Motor neuron (in vitro differentiated cells): ENCODE measurements at regions of chr17 and their contacts with region 1.

Region 1: DNA sequence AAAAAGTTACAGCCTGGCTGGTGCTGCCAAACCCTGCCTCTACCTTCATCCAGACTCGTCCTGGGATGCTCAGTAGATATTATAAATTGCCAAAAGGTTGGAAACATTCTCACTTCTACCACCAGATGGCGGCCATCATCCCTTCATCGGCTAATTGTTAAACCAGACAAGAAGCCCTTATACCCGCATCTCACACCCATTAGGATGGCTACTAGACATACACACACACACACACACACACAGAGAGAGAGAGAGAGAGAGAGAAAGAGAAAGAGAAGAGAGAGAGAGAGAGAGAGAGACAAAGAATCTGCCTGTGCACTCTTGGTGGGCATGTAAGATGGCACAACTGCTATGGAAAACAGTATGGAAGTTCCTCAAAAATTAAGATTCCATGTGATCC is 15.0 kb upstream of the SCIMP start:
- ATAC-seq: peak; percentile 30 to 93 (median 71)
- H3K4me3 ChIP-seq: no peak overlapping the region
- H3K27ac ChIP-seq: no peak overlapping the region
- H3K4me1 ChIP-seq: no peaks in the 10 kb centered on the region

Region 2: DNA sequence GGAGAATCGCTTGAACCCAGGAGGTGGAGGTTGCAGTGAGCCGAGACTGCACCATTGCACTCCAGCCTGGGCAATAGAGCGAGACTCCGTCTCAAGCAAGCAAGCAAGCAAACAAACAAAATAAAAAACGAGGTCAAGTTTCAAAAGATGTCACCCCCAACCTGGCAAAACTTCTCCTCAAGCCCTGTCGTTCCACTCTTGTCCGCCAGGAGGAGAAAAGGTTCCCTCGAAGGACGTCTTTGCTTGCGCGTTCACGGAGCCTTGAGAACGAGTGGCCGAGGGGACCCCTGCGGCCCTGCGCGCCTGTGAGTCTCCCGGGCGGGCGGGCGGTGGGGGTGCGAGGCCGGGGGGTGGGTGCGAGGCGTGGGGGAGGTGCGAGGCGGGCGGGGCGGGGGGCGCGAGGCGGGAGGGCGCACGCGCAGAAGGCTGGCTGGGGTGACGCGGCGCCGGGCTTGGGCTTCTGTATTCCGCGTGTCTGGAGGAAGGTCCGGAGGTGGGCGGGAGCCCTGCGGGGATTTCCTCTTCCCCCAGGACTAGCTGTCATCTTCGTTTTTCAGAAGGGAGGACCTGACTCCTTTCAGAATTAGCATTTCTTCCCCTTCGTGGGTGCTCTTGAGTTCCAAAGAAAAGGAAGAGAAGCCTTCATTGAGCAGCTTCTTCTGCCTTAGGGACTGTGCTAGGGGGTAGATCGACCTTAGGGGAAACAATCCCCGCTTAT is 218.1 kb before region 1 on chr17:
- in situ Hi-C with region 1: no loop called
- ATAC-seq: peak; percentile 78 to 95 (median 92)
- H3K4me3 ChIP-seq: peak overlapping the region; percentile 20 to 29 (median 25)
- H3K27ac ChIP-seq: peak overlapping the region; percentile 1 to 66
- H3K4me1 ChIP-seq: peaks cover 5 to 6% of the 10 kb centered on the region in 2 donors

Region 3: DNA sequence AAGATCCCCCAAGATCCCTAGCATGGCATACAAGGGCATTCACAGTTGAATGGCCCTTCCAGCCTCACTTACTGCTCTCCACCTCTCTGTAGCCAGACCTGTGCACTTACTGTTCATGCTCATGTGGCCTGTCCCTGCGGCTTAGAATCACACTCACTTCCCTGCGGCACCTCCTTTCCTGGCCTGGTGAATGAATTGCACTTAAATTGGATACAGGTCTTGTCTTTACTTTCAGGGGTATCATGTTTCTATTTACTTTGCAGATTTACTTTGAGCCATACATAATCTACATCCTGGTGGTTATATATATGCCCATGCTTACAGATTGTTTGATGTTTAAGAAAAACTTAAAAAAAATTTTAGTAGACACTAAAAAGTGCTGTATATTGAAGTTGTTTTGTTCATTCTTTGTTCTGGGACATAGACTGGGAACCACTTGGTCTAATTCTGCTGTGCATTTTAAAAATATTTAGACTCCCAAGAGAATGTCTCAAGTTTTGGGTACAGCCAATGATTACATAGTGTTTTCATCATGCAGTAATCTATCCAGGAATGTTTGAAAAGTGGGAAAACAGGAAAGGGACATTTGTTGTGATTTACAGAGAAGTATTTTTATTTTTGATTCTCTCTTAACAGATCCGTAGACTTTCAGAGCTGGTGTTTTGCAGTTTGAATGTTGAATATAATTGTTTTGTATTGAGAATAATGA is 106.0 kb after region 1 on chr17:
- in situ Hi-C with region 1: loop called in 1 of 9 experiments (anchors 25 kb)
- ATAC-seq: peak in 3 of 8 experiments; percentile 45 to 96 (median 66)
- H3K4me3 ChIP-seq: no peak overlapping the region
- H3K27ac ChIP-seq: no peak overlapping the region
- H3K4me1 ChIP-seq: no peaks in the 10 kb centered on the region